ENCODE measurements at regions of chr5 and their contacts with region 1.

Region 1: DNA sequence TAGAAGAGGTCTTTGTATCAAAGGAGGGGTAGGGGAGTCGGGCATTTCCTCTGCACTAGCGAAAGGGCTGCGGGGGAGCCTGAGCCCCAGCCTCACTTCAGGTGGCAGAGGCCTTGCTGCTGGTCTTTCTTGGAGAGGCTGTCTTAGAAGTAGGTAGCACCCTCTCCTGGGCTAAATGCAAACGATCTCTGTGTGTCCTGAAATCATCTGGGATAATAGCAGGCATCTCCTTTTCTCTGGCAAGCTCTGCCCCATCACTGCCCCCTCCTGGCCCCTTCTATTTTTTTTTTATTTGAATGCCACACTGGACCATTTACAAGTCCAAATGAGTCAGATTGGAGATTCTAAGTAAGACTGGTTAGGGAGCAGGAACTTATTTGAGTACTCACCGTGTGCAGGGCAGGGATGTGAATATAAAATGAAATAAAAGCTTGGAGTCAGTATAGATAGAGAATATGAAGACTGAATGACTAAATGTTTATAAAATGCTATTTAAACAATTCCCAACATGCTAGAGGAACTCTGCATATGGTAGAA is 137.1 kb downstream of the FGF1 start:
- DNase-seq: peak; percentile 96
- H3K4me3 ChIP-seq: no peak overlapping the region
- H3K27ac ChIP-seq: peak overlapping the region; percentile 2
- H3K4me1 ChIP-seq: peaks cover 51% of the 10 kb centered on the region
- H3K27me3 ChIP-seq: no peaks in the 10 kb centered on the region
- CTCF ChIP-seq: peak; percentile 98

Region 2: DNA sequence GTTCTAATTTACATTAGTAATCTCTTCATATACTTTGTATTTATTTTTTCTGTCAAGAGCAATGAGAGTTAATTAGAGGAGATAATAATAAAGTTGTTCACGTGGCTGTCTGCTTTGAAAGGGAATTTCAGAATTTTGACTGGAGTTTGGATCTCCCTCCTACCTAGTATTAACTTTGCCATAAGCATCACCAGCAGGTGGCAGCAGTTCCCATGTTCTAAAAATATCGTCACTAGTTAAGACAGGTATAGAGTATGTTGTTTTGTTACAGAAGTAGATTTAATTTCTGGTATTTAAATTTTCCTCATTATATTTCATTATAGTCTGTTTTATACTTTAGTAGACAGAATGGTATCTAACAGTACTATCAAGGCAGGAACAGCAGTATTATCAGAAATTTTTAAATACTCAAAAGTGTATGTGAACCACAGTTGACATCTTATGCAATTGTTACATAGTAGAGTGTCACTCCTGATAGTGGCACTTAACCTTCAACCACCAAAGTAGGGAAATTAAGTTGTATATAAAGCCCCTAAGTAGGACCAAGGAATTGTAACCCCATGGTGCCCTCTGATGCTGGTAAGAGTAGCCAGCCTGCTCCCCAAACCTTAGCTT is 556.4 kb before region 1 on chr5:
- CTCF ChIA-PET with region 1: no interaction called
- POLR2A ChIA-PET with region 1: no interaction called
- intact Hi-C with region 1: loop called (anchors 10 kb)
- DNase-seq: peak; percentile 77
- H3K4me3 ChIP-seq: no peak overlapping the region
- H3K27ac ChIP-seq: no peak overlapping the region
- H3K4me1 ChIP-seq: no peaks in the 10 kb centered on the region
- H3K27me3 ChIP-seq: no peaks in the 10 kb centered on the region
- CTCF ChIP-seq: peak; percentile 89

Region 3: GRCh38 chr5:142151436-142152383 is 397.1 kb before region 1 on chr5:
- CTCF ChIA-PET with region 1: interaction called, 4 read pairs
- POLR2A ChIA-PET with region 1: interaction called, 4 read pairs
- intact Hi-C with region 1: loop called (anchors 1 kb)
- DNase-seq: peak; percentile 88
- H3K4me3 ChIP-seq: no peak overlapping the region
- H3K27ac ChIP-seq: no peak overlapping the region
- H3K4me1 ChIP-seq: peaks cover 24% of the 10 kb centered on the region
- H3K27me3 ChIP-seq: no peaks in the 10 kb centered on the region
- CTCF ChIP-seq: peak; percentile 95

Region 4: DNA sequence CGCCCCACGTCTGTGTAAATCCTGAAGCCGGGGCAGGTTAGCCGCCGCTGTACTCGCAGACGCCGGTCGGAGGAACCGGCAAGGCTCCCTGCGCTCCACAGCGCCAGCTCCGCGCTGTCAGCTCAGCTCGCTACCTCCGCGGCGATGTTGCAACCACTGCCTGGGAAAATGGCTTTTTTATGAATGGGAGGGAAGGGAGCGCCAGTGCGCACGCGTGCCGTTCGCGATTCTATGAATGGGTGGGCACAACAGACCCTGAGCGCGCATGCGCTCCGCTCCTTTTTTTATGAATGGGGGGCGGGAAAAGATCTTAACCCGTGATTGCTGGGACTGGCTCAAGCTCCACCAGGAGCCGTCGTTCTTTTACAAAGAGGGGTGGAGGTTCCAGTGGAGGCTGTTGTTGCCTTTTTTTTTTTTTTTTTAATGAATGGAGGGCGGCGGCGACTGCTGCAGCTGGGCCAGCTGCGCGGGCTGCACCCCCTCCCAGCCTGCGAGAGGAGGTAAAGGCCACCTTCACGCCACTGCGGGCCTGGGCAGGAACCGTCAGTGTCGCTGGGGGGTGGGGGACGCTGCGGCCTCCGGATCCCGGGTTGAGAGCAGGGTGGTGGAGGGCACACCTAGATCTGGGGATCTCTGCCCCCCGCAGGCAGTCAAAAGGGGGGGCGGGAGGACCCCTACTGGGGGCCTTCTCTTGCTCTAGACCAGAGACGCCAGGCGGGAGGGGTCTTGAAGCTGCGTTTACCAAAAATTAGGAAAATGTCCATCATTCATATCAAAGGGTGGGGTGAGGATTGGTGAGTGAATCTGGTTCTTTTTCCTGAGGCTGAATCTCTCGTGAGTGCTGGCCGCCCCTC is 223.7 kb before region 1 on chr5 and contains the start of gene SPRY4:
- CTCF ChIA-PET with region 1: interaction called, 5 read pairs
- POLR2A ChIA-PET with region 1: no interaction called
- intact Hi-C with region 1: loop called (anchors 1 kb)
- DNase-seq: peak; percentile 99
- H3K4me3 ChIP-seq: peak within 1 kb of the TSS; percentile 77
- H3K27ac ChIP-seq: peak within 1 kb of the TSS; percentile 98
- H3K4me1 ChIP-seq: peaks cover 61% of the 10 kb centered on the region
- H3K27me3 ChIP-seq: no peaks in the 10 kb centered on the region
- CTCF ChIP-seq: no peak; the same call in 1 of the 2 replicates
- total RNA-seq, gene SPRY4: 35.5 and 35.6 TPM in 2 replicates

Region 5: DNA sequence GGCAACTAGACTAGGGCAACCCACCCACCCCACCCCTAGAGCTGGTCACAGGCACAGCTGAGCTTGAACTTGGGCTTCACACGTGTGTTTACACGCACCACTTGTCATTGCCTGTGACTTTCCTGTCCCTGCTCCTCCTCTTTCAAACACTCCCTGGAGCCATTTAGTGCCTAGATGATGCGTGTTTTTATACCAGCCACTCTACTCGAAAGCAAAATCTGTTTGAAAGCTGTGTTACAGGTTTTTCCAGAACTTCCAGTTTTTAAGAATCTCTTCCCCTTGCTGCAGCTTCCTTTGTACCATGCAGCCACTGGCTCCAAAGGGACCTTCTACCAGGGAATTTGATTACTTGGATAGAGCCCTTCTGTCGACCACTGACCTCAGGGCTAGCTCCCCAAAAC is 145.2 kb before region 1 on chr5:
- CTCF ChIA-PET with region 1: interaction called, 6 read pairs
- POLR2A ChIA-PET with region 1: no interaction called
- intact Hi-C with region 1: loop called (anchors 5 kb)
- DNase-seq: no peak
- H3K4me3 ChIP-seq: no peak overlapping the region
- H3K27ac ChIP-seq: peak overlapping the region; percentile 80
- H3K4me1 ChIP-seq: peaks cover 64% of the 10 kb centered on the region
- H3K27me3 ChIP-seq: no peaks in the 10 kb centered on the region
- CTCF ChIP-seq: no peak